Activated CD4-positive, alpha-beta T cell treated with anti-CD3 and anti-CD28 coated beads, Interleukin-2, amount 10 ng/mL, durations not matched to agents 24 days and 14 days (primary cell): ENCODE measurements at regions of chr14 and their contacts with region 1.

Region 1: GRCh38 chr14:98138666-98139065 is 1133.3 kb downstream of the BCL11B start:
- DNase-seq: peak; percentile 93
- H3K4me3 Mint-ChIP-seq: peak overlapping the region; percentile 77
- H3K27ac Mint-ChIP-seq: peak overlapping the region; percentile 79
- H3K4me1 Mint-ChIP-seq: peaks cover 72% of the 10 kb centered on the region
- H3K27me3 Mint-ChIP-seq: no peaks in the 10 kb centered on the region

Region 2: GRCh38 chr14:97931273-97931672 is 207.4 kb before region 1 on chr14:
- intact Hi-C with region 1: no loop called
- DNase-seq: no peak
- H3K4me3 Mint-ChIP-seq: no peak overlapping the region
- H3K27ac Mint-ChIP-seq: no peak overlapping the region
- H3K4me1 Mint-ChIP-seq: peaks cover 2% of the 10 kb centered on the region
- H3K27me3 Mint-ChIP-seq: no peaks in the 10 kb centered on the region

Region 3: GRCh38 chr14:97978341-97978740 is 160.3 kb before region 1 on chr14:
- intact Hi-C with region 1: loop called (anchors 1 kb)
- DNase-seq: peak; percentile 92
- H3K4me3 Mint-ChIP-seq: peak overlapping the region; percentile 89
- H3K27ac Mint-ChIP-seq: peak overlapping the region; percentile 97
- H3K4me1 Mint-ChIP-seq: peaks cover 49% of the 10 kb centered on the region
- H3K27me3 Mint-ChIP-seq: no peaks in the 10 kb centered on the region

Region 4: DNA sequence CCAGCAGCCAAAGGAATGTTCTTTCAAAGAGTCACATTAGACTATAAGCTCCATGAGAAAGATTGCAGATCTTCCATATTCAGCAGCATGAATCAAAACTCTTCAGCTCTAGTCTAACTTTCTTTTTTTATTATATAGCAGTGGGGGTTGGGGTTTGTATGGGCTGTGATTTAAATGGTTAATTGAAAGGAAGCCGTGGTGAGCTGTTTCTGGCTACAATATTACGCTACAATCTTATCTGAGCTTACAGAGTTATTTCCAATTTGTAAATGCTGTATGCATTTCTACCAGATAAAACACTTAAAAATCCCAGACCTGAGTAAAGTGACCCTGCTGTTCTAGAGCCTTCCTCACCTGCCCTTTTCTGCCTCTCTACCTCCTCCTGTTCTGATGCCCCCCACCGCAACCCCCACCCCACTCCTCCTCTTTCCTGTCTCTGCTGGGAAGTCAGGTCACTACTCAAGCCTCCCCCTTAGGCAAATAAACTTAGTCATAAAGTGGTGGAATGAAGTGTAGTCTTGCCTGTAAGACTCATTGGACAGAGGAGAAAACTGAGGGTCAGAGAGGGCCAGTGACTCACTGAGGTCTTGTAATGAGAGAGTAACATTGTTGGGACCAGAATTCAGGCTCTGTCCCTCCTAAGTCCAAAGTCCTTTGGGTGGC is 43.9 kb after region 1 on chr14:
- intact Hi-C with region 1: loop called (anchors 2 kb)
- DNase-seq: peak; percentile 73
- H3K4me3 Mint-ChIP-seq: peak overlapping the region; percentile 72
- H3K27ac Mint-ChIP-seq: peak overlapping the region; percentile 98
- H3K4me1 Mint-ChIP-seq: peaks cover 82% of the 10 kb centered on the region
- H3K27me3 Mint-ChIP-seq: no peaks in the 10 kb centered on the region

Region 5: DNA sequence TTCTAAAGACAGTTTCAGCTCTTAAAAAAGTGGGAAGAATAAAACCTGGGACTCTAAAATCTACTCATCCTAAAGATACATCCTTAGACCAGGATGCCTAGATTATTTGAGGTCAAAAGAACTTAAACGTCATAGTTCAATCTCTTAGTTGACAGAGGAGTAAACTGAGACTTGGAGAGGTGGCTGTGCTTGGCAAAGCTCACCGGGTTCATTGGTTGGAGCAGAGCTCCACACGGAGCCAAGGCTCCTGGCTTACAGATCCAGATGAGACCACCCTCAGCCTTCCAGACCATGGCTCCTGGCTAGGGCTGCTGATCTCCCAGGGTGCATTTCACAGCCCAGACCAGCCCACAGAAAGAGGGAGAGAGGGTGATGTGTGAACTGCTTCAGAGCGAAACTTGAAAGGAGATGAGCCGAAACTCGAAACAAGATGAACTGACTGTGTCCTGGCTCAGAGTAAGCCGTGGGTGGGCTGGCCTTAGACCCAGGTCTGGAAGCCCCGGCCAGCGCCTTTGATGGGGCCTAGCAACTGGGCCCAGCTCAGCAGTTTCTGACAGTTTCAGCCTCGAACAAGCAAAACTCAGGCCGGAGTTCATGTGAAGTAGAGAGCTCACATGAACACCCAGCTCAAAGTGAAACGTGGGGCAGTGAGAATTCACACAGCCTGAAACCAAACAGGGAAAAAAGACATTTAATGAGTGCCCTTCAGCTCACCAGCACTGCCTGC is 88.5 kb after region 1 on chr14:
- intact Hi-C with region 1: loop called (anchors 5 kb)
- DNase-seq: peak; percentile 82
- H3K4me3 Mint-ChIP-seq: peak overlapping the region; percentile 70
- H3K27ac Mint-ChIP-seq: peak overlapping the region; percentile 87
- H3K4me1 Mint-ChIP-seq: peaks cover 60% of the 10 kb centered on the region
- H3K27me3 Mint-ChIP-seq: no peaks in the 10 kb centered on the region

Region 6: GRCh38 chr14:98931911-98932310 is 793.2 kb after region 1 on chr14:
- intact Hi-C with region 1: loop called (anchors 5 kb)
- DNase-seq: peak; percentile 92
- H3K4me3 Mint-ChIP-seq: peak overlapping the region; percentile 56
- H3K27ac Mint-ChIP-seq: peak overlapping the region; percentile 84
- H3K4me1 Mint-ChIP-seq: peaks cover 48% of the 10 kb centered on the region
- H3K27me3 Mint-ChIP-seq: no peaks in the 10 kb centered on the region

Region 7: DNA sequence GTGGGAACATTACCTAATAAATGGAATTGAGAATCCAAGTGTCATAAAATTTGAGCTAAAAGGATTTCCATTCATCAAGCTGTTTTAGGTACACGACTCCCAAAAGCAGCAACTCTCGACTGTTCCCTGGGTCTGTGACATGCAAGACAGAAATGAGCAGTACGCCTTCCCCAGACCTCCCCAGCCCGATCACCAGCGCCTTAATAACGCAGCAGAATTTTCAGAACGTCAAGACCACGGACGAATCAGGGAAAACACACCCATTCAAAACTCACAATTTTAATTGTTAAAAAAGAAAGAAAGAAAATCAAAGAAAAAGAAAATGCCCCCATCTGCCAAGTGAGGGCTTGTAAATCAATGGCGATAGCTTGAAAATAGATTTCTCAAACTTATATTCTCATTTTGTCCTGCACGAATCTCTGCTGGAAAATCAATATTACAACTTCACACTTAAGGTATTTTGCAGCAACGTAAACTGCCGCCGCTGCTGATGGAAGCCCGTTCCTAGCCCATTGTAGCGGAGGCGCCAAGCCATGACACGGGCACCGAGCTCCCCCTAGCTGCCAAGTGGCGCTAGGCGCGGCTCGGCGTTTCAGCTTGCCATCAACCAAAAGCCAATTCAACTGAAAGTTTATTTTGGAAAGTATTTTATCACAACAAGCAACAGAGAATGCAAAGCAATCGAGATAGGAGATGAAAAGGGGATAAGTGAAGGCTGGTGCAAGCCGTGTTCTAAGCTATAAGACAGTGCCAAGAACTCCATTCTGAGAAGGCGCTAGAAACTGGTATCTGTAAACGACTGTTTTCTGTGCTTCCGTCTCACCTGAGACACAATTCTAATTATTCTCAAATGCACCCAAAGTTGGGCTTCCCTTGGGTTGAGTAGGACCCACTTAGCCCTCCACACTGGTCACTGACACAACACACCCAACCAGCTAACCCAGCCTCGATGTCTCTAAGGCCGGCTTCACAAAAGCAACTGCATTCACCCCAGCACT is 1127.8 kb after region 1 on chr14:
- intact Hi-C with region 1: loop called (anchors 1 kb)
- DNase-seq: peak; percentile 97
- H3K4me3 Mint-ChIP-seq: peak overlapping the region; percentile 91
- H3K27ac Mint-ChIP-seq: peak overlapping the region; percentile 99
- H3K4me1 Mint-ChIP-seq: peaks cover 65% of the 10 kb centered on the region
- H3K27me3 Mint-ChIP-seq: no peaks in the 10 kb centered on the region